Posterior cingulate gyrus (tissue), 11 donors: ENCODE measurements at regions of chr6 and their contacts with region 1.

Region 1: GRCh38 chr6:107318100-107318736 is 141.1 kb downstream of the PDSS2 start:
- DNase-seq: peak in 6 of 10 donors; percentile 17 to 86 (median 34)

Region 2: DNA sequence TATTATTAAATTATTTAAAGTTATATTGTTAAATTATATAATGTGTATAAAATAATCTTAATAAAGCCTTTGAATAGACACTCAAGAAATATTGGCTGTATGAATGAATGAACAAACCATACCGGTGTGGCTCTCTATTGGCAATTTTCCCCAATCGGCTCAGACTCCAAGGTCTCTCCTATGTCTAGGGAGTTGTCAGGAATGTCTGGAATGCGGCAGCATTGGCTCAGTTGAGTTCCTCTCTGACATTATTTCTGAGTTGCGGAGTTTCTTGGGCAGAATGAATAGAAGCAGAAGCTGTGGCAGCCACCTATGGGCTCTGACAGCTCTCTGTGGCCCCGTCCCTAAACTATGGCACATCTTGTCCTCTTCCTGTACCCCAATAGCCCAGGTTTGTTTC is 282.7 kb after region 1 on chr6:
- intact Hi-C with region 1: loop called (anchors 10 kb)
- DNase-seq: no peak